ENCODE measurements at regions of chr2 and their contacts with region 1.

Region 1: DNA sequence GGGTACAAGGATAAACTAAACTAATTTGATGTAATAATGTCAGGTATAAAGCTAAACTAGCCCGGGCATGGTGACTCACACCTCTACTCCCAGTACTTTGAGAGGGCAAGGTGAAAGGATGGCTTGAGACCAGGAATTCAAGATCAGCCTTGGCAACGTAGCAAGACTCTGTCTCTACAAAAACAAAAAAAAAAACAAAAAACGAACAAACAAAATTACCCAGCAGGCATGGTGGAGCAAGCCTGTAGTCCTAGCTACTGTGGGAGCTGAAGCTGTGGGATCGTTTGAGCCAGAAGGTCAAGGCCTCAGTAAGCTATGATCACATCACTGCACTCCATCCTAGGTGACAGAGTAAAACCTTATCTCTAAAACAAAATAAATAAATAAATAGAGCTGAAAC is 131.8 kb upstream of the KYNU start:
- DNase-seq: peak; percentile 19
- ATAC-seq: peak; percentile 90
- H3K4me3 ChIP-seq: no peak overlapping the region
- H3K27ac ChIP-seq: no peak overlapping the region
- H3K4me1 ChIP-seq: peaks cover 3% of the 10 kb centered on the region
- H3K27me3 ChIP-seq: no peaks in the 10 kb centered on the region
- CTCF ChIP-seq: no peak
- EP300 ChIP-seq: no peak
- POLR2A ChIP-seq: no peak
- RAD21 ChIP-seq: no peak

Region 2: DNA sequence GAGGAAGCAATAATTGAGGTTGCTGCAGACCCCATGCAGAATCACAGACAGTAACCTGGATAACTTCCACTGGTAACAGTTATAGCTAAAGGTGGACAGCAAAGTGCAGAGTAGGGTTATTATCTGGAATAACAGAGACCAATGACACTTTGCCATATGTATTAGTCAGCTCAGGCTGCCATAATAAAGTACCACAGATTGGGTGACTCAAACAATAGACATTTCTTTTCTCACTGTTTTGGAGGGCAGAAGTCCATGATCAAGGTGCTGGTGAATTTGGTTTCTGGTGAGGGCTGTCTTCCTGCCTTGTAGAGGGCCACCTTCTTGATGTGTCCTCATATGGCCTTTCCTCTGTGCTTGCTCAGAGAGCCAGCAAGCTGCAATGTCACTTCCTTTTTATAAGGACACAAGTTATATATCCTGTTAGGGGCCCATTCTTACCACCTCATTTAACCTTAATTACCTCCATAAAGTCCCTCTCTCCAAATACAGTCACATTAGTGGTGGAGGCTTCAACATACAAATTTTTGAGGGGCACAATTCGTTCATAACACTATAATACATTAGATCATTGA is 423.9 kb before region 1 on chr2:
- CTCF ChIA-PET with region 1: no interaction called
- POLR2A ChIA-PET with region 1: no interaction called
- in situ Hi-C with region 1: no loop called
- intact Hi-C with region 1: no loop called
- DNase-seq: no peak
- ATAC-seq: no peak
- H3K4me3 ChIP-seq: no peak overlapping the region
- H3K27ac ChIP-seq: no peak overlapping the region
- H3K4me1 ChIP-seq: no peaks in the 10 kb centered on the region
- H3K27me3 ChIP-seq: no peaks in the 10 kb centered on the region
- CTCF ChIP-seq: no peak
- EP300 ChIP-seq: no peak
- POLR2A ChIP-seq: no peak
- RAD21 ChIP-seq: no peak

Region 3: GRCh38 chr2:142693171-142693950 is 52.3 kb before region 1 on chr2:
- CTCF ChIA-PET with region 1: no interaction called
- POLR2A ChIA-PET with region 1: no interaction called
- in situ Hi-C with region 1: no loop called
- intact Hi-C with region 1: loop called (anchors 5 kb)
- DNase-seq: no peak
- ATAC-seq: peak; percentile 27; the same call in 1 of the 3 replicates
- H3K4me3 ChIP-seq: no peak overlapping the region
- H3K27ac ChIP-seq: no peak overlapping the region
- H3K4me1 ChIP-seq: peaks cover 19% of the 10 kb centered on the region
- H3K27me3 ChIP-seq: no peaks in the 10 kb centered on the region
- CTCF ChIP-seq: no peak
- EP300 ChIP-seq: no peak
- POLR2A ChIP-seq: no peak
- RAD21 ChIP-seq: no peak